Activated CD4-positive, alpha-beta T cell treated with anti-CD3 and anti-CD28 coated beads, Interleukin-2, amount 10 ng/mL, durations not matched to agents 7 days and 5 days (primary cell): ENCODE measurements at regions of chr19 and their contacts with region 1.

Region 1: GRCh38 chr19:42229855-42230351 is 9.8 kb downstream of the ZNF526 start:
- DNase-seq: no peak
- H3K4me3 Mint-ChIP-seq: no peak overlapping the region
- H3K27ac Mint-ChIP-seq: peak overlapping the region; percentile 85
- H3K4me1 Mint-ChIP-seq: peaks cover 28% of the 10 kb centered on the region
- H3K27me3 Mint-ChIP-seq: no peaks in the 10 kb centered on the region

Region 2: DNA sequence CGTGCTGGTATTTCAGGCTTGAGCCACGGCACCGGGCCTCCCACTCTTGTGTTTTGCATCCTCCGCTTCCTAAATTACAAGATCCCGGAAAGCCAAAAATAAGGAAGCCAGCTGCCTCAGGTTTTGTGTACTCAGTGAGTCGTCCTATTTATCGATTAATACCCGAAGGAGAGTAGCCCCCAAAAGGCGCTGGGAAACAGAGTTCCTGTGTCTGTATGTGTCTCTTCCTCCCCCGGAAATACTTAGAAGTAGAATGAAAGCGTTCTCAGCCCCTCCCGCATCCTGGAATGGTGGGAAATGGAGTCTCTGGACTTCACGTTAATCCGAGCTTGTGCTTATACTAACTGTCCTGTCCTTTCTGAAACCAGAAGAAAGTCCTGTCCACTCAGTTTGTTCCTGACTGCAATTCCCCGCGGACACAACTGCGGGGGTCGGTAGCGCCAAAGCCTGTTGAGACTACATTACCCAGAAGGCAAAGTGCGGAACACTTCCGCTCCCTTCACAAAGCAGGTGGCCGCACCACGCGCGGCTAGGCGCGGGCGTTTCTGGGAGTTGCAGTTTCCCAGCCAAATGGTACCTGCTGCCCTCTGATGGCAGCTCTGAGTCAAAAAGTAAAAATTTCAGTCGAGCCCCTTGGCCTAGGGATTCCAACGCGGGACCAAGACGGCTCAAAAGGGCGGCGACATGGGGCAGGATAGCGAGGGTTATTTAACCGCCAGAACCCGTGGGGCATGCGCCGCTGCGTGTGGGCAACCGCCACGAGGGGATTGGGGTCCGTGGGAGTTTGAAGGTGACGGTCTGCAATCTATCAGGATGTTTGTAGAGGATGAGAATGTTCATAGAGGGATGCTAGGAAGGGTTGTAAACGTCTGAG is 14.7 kb after region 1 on chr19:
- CTCF ChIA-PET with region 1: interaction called, 12 read pairs
- POLR2A ChIA-PET with region 1: no interaction called
- DNase-seq: peak; percentile 96
- H3K4me3 Mint-ChIP-seq: peak overlapping the region; percentile 92
- H3K27ac Mint-ChIP-seq: peak overlapping the region; percentile 98
- H3K4me1 Mint-ChIP-seq: peaks cover 45% of the 10 kb centered on the region
- H3K27me3 Mint-ChIP-seq: no peaks in the 10 kb centered on the region

Region 3: GRCh38 chr19:42254989-42255765 is 25.3 kb after region 1 on chr19 and contains the start of gene ERF:
- CTCF ChIA-PET with region 1: no interaction called
- POLR2A ChIA-PET with region 1: no interaction called
- DNase-seq: peak; percentile 91
- H3K4me3 Mint-ChIP-seq: peak within 1 kb of the TSS; percentile 76
- H3K27ac Mint-ChIP-seq: peak within 1 kb of the TSS; percentile 87
- H3K4me1 Mint-ChIP-seq: peaks cover 35% of the 10 kb centered on the region
- H3K27me3 Mint-ChIP-seq: peaks cover 12% of the 10 kb centered on the region
- total RNA-seq, gene ERF: 56.5 to 57.9 TPM

Region 4: DNA sequence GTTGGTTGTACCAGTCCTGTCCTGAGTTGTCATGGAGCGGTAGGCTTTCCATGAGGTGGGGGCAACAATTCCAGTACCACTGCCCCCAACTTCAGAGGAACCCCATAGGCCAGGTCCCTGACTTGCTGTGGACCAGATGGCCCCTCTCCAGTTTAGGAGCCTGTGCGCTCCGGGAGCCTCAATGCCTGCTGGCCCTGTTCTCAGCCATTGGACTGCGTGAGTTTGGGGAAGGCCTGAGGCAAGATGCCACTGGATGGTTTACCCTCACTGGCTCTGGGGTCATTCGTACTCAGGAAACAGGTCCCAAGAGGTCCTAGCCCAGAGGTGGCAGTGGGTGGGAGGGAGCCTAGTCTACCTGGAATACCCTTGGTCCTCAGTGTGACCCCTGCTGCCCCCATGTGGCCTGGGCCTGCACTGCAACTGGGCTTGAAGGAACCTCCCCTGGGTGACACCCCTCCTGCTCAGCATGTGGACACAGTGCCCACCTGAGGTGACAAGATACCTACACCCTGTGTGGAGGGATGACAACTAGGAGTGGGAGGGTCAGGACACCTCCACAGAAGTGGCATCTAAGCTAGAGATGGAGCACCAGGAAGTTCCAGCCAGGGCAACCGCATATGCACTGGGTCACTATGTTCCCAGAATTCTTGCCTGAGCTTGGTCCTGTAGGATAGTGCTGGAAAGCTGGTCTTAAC is 66.1 kb after region 1 on chr19:
- CTCF ChIA-PET with region 1: no interaction called
- POLR2A ChIA-PET with region 1: no interaction called
- DNase-seq: peak; percentile 91
- H3K4me3 Mint-ChIP-seq: no peak overlapping the region
- H3K27ac Mint-ChIP-seq: no peak overlapping the region
- H3K4me1 Mint-ChIP-seq: peaks cover 20% of the 10 kb centered on the region
- H3K27me3 Mint-ChIP-seq: no peaks in the 10 kb centered on the region